OCI-LY7 (cell line): ENCODE measurements at regions of chr15 and their contacts with region 1.

Region 1: DNA sequence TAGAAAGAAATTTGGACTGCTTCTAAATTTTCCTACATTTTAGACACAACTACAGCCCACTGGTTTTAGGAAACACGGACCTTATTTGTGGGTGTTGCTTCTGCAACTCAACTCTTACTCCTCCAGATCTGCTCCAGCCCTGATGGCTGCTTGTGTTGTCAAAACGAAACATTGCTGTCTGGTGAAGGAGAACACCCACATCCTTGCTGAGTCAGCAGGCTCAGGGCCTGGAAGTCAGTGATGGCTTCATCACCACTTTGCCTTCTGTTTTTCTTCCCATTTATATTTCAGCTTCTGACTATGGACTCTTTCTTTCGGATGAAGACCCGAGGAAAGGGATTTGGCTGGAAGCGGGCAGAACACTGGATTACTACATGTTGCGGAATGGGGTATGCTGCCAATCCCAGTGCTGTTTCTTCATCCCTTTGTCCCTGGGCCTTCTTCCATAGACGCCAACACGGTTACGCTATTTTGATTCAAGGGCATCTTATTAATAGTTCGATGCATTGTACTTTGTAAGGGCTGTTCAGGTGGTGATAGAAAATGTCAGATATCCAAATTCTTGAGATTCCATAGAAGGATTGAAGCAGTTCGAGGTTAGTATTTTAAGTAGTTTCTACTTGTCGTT is 392.6 kb upstream of the TPM1 start:
- DNase-seq: no peak
- H3K4me3 ChIP-seq: no peak overlapping the region
- H3K27ac ChIP-seq: no peak overlapping the region
- H3K4me1 ChIP-seq: no peaks in the 10 kb centered on the region
- CTCF ChIP-seq: no peak

Region 2: DNA sequence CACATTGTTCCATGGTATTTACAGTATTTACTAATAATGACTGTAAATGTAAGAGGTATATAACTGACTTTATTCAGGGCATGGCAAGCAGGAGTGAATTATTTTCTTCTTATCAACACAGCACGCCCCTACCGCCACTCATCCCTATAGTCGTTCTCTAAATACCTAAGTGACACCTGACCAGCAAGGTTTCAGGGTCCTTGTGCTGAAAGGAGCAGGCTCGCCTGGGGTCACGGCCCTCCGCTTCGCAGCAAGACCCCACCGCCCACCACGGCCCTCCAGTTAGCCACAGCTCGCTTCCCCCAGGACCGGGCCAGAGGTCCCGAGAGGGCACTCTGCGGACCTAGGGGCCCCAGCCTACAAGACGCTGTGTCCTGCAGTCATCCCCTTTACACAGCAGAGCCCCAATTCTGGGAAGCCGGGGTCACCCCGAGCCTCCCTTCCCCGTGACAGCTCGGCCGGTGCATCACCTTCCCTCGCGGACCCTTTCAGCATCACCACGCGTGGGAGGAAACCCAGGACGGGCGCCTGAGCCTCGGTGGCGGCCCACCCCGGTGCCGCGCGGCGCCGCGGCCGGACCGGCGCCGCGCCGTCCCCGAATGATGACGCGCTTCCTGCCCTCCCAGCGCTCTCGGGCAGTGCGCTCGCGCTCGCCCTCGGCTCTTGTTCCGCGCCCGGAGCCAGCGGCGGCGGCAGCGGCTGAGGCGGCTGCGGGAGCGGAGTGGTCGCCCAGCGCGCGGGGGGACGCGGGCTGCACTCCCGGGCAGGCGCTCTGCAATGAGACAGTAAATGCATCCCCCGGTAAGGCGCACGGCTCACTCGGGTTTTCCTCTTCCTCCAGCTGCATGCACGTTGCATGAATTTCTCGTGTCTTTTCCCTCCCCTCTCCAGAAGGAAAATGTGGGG is 259.8 kb before region 1 on chr15:
- CTCF ChIA-PET with region 1: no interaction called
- POLR2A ChIA-PET with region 1: no interaction called
- intact Hi-C with region 1: loop called (anchors 2 kb)
- DNase-seq: peak; percentile 86
- H3K4me3 ChIP-seq: peak within 1 kb of the TSS; percentile 89
- H3K27ac ChIP-seq: no peak within 1 kb of the TSS
- H3K4me1 ChIP-seq: peaks cover 18% of the 10 kb centered on the region
- CTCF ChIP-seq: no peak